ENCODE measurements at regions of chr1 and their contacts with region 1.

Region 1: DNA sequence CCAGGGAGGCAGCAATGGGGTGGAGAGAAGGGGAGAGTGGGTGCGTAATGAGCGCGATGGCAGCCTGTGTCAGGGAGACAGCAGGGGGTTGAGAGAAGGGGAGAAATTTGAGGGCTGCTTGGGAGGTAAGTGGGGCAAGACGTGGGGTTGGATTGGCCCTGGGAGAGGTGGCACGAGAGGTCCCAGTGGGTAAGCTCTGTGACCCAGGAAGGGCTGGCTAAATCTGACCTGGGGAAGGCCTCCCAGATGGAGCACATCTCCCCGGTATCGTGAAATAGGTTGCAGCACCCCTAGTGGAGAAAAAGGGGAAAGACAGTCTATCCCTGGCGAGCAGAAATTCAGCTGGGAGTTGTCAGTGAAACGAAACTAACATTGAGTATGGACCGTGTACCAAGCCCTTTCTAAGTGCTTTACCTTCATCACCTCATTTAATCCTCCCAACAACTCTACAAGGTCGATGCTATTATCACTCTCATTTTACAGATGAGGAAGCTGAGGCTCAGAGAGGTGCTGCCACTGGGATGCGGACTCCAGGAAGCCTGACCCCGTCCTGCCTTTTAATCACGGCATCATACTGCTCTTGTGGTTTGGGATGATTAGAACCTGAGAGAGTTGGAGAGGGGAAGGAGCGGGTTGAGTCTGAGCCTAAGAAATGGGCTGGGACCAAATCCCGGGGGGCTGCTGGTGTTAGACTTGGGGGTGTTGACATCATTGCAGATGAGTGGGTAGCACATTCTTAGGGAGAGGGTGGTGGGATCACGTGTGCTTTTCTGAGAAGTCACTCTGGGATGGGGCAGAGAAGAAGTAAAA is 56.6 kb upstream of the RPL11 start:
- DNase-seq: no peak
- H3K4me3 ChIP-seq: peak overlapping the region; percentile 38 to 58 (median 54)
- H3K27ac ChIP-seq: peak overlapping the region; percentile 75 to 85 (median 81)
- H3K4me1 ChIP-seq: peaks cover 8 to 30% (median 25%) of the 10 kb centered on the region in 4 donors
- H3K27me3 ChIP-seq: no peaks in the 10 kb centered on the region
- CTCF ChIP-seq: peak; percentile 93 to 97 (median 94)
- EP300 ChIP-seq: no peak
- POLR2A ChIP-seq: no peak

Region 2: GRCh38 chr1:23489842-23490241 is 145.2 kb before region 1 on chr1:
- intact Hi-C with region 1: loop called (anchors 5 kb)
- DNase-seq: no peak
- H3K4me3 ChIP-seq: no peak overlapping the region
- H3K27ac ChIP-seq: no peak overlapping the region
- H3K4me1 ChIP-seq: peaks cover 1 to 6% (median 4%) of the 10 kb centered on the region in 4 donors
- H3K27me3 ChIP-seq: no peaks in the 10 kb centered on the region
- CTCF ChIP-seq: no peak
- EP300 ChIP-seq: no peak
- POLR2A ChIP-seq: no peak

Region 3: GRCh38 chr1:23539698-23540266 is 95.3 kb before region 1 on chr1:
- intact Hi-C with region 1: loop called (anchors 1 kb)
- DNase-seq: peak; percentile 98
- H3K4me3 ChIP-seq: peak overlapping the region; percentile 4 to 22 (median 12)
- H3K27ac ChIP-seq: no peak overlapping the region
- H3K4me1 ChIP-seq: peaks cover under 1 to 17% (median 13%) of the 10 kb centered on the region in 4 donors
- H3K27me3 ChIP-seq: no peaks in the 10 kb centered on the region
- CTCF ChIP-seq: peak; percentile 91 to 95 (median 91)
- EP300 ChIP-seq: no peak
- POLR2A ChIP-seq: no peak

Region 4: GRCh38 chr1:23559136-23559984 is 75.7 kb before region 1 on chr1 and contains the start of gene ID3:
- intact Hi-C with region 1: no loop called
- DNase-seq: peak; percentile 99
- H3K4me3 ChIP-seq: peak within 1 kb of the TSS; percentile 81 to 91 (median 87)
- H3K27ac ChIP-seq: peak within 1 kb of the TSS; percentile 94 to 97 (median 96)
- H3K4me1 ChIP-seq: peaks cover 52 to 89% (median 79%) of the 10 kb centered on the region in 4 donors
- H3K27me3 ChIP-seq: no peaks in the 10 kb centered on the region
- CTCF ChIP-seq: no peak
- EP300 ChIP-seq: no peak
- POLR2A ChIP-seq: peak; percentile 82
- total RNA-seq, gene ID3: 75.2 to 352 (median 274) TPM

Measured in esophagus muscularis mucosa (tissue), 4 donors.